CD8-positive, alpha-beta memory T cell (primary cell): ENCODE measurements at regions of chr6 and their contacts with region 1.

Region 1: GRCh38 chr6:87139236-87139635 is 16.1 kb upstream of the ZNF292 start:
- DNase-seq: peak in 4 of 5 donors; percentile 13 to 62 (median 58)
- H3K4me3 ChIP-seq: no peak overlapping the region
- H3K4me3 Mint-ChIP-seq: no peak overlapping the region
- H3K27ac ChIP-seq: no peak overlapping the region
- H3K27ac Mint-ChIP-seq: no peak overlapping the region
- H3K4me1 ChIP-seq: no peaks in the 10 kb centered on the region
- H3K4me1 Mint-ChIP-seq: peaks cover 2 to 5% (median 4%) of the 10 kb centered on the region in 3 donors
- H3K27me3 ChIP-seq: no peaks in the 10 kb centered on the region
- H3K27me3 Mint-ChIP-seq: peaks cover 4 to 12% of the 10 kb centered on the region in 2 donors

Region 2: GRCh38 chr6:87237804-87238203 is 98.6 kb after region 1 on chr6:
- CTCF ChIA-PET with region 1: interaction called, 15 read pairs
- POLR2A ChIA-PET with region 1: no interaction called
- DNase-seq: peak in 2 of 5 donors; percentile 9 to 12
- H3K4me3 ChIP-seq: no peak overlapping the region
- H3K4me3 Mint-ChIP-seq: no peak overlapping the region
- H3K27ac ChIP-seq: no peak overlapping the region
- H3K27ac Mint-ChIP-seq: no peak overlapping the region
- H3K4me1 ChIP-seq: no peaks in the 10 kb centered on the region
- H3K4me1 Mint-ChIP-seq: peaks cover 4 to 6% (median 5%) of the 10 kb centered on the region in 3 donors
- H3K27me3 ChIP-seq: no peaks in the 10 kb centered on the region
- H3K27me3 Mint-ChIP-seq: no peaks in the 10 kb centered on the region